Naive thymus-derived CD4-positive, alpha-beta T cell (primary cell): ENCODE measurements at regions of chr6 and their contacts with region 1.

Region 1: DNA sequence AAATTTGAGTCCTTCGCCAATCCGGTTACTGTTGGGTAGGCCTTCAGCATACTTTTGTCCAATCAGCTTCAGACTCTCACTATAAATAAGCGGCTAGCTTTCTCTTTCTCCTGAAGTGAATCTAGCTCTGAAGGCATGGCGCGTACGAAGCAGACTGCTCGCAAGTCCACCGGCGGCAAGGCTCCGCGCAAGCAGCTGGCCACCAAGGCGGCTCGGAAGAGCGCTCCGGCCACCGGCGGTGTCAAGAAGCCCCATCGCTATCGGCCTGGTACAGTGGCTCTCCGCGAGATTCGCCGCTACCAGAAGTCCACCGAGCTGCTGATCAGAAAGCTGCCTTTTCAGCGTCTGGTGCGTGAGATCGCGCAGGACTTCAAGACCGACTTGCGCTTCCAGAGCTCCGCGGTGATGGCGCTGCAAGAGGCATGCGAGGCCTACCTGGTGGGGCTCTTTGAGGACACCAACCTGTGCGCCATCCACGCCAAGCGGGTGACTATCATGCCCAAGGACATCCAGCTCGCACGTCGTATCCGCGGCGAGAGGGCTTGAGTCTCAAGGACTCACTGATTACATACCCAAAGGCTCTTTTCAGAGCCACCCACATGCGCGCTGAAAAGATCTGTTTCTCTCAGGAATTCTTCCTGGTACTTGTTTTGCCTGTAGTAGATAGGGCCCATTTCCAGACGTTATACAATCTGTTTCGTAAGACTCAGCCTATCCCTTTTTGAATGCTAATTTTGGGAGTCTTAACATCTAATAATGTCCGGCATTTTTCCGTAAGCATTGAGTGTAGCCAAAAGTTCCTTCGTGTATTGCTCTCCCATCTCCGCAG is 102.0 kb downstream of the OR2B2 start:
- DNase-seq: peak; percentile 66 to 96 (median 92)
- ATAC-seq: peak; percentile 71
- H3K4me3 ChIP-seq: peak overlapping the region; percentile 76
- H3K4me3 Mint-ChIP-seq: peak overlapping the region; percentile 81 to 97 (median 94)
- H3K27ac ChIP-seq: peak overlapping the region; percentile 86
- H3K27ac Mint-ChIP-seq: peak overlapping the region; percentile 95 to 99 (median 98)
- H3K4me1 ChIP-seq: peaks cover 20 to 42% of the 10 kb centered on the region in 2 donors
- H3K4me1 Mint-ChIP-seq: peaks cover 18 to 82% (median 61%) of the 10 kb centered on the region in 7 donors
- H3K27me3 ChIP-seq: no peaks in the 10 kb centered on the region
- H3K27me3 Mint-ChIP-seq: peaks cover 0 to 9% (median 0%) of the 10 kb centered on the region in 5 donors

Region 2: DNA sequence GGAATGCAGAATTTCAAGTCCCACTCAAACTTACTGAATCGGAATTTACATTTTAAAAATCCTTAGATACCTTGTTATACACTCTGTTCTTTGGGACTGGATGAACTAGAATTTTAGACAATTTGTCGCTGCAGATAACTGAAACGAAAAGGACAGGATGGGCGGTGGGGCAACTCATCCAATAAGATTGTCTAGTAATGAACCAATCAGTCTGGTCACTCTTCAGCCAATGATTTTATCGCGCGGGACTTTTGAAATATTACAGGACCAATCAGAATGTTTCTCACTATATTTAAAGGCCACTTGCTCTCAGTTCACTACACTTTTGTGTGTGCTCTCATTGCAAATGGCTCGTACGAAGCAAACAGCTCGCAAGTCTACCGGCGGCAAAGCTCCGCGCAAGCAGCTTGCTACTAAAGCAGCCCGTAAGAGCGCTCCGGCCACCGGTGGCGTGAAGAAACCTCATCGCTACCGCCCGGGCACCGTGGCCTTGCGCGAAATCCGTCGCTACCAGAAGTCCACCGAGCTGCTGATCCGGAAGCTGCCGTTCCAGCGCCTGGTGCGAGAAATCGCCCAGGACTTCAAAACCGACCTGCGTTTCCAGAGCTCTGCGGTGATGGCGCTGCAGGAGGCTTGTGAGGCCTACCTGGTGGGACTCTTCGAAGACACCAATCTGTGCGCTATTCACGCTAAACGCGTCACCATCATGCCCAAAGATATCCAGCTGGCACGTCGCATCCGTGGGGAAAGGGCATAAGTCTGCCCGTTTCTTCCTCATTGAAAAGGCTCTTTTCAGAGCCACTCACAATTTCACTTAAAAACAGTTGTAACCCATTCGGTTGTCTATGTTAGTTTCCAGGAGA is 1764.9 kb before region 1 on chr6:
- CTCF ChIA-PET with region 1: interaction called, 3 read pairs
- POLR2A ChIA-PET with region 1: interaction called, 38 read pairs
- intact Hi-C with region 1: loop called in 1 of 2 experiments (anchors 5 kb)
- DNase-seq: peak; percentile 39 to 93 (median 89)
- ATAC-seq: peak; percentile 68
- H3K4me3 ChIP-seq: peak overlapping the region; percentile 91
- H3K4me3 Mint-ChIP-seq: peak overlapping the region; percentile 87 to 98 (median 94)
- H3K27ac ChIP-seq: peak overlapping the region; percentile 90
- H3K27ac Mint-ChIP-seq: peak overlapping the region; percentile 80 to 98 (median 95)
- H3K4me1 ChIP-seq: peaks cover 7 to 19% of the 10 kb centered on the region in 2 donors
- H3K4me1 Mint-ChIP-seq: peaks cover 8 to 51% (median 20%) of the 10 kb centered on the region in 7 donors
- H3K27me3 ChIP-seq: no peaks in the 10 kb centered on the region
- H3K27me3 Mint-ChIP-seq: peaks cover 0 to 3% (median 0%) of the 10 kb centered on the region in 5 donors

Region 3: DNA sequence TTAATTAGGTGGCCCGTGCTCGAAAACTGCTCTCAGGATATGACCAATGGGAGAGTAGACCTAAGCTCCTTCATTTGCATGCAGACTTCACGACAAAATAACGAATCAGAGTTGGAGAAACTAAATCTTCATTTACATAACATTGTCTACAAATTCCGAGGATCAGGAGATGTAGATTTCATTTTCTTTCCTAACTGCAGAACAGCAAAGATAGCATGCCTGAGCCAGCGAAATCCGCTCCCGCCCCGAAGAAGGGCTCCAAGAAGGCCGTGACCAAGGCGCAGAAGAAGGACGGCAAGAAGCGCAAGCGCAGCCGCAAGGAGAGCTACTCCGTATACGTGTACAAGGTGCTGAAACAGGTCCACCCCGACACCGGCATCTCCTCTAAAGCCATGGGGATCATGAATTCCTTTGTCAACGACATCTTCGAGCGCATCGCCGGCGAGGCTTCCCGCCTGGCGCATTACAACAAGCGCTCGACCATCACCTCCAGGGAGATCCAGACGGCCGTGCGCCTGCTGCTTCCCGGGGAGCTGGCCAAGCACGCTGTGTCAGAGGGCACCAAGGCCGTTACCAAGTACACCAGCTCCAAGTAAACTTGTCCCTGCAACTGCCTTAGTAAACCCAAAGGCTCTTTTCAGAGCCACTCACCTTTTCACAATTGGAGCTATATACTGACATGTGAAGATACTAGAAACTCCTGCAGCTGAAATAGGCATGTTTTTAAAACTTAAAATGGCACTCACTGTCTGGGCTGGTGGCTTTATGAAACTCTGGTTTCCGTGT is 1626.4 kb before region 1 on chr6:
- CTCF ChIA-PET with region 1: no interaction called
- POLR2A ChIA-PET with region 1: interaction called, 11 read pairs
- intact Hi-C with region 1: no loop called
- DNase-seq: peak; percentile 43 to 83 (median 77)
- ATAC-seq: peak; percentile 91
- H3K4me3 ChIP-seq: peak overlapping the region; percentile 82
- H3K4me3 Mint-ChIP-seq: peak overlapping the region; percentile 84 to 99 (median 98)
- H3K27ac ChIP-seq: peak overlapping the region; percentile 76
- H3K27ac Mint-ChIP-seq: peak overlapping the region; percentile 83 to 99 (median 90)
- H3K4me1 ChIP-seq: peaks cover 13 to 30% of the 10 kb centered on the region in 2 donors
- H3K4me1 Mint-ChIP-seq: peaks cover 19 to 59% (median 49%) of the 10 kb centered on the region in 7 donors
- H3K27me3 ChIP-seq: no peaks in the 10 kb centered on the region
- H3K27me3 Mint-ChIP-seq: no peaks in the 10 kb centered on the region

Region 4: GRCh38 chr6:27177485-27178406 is 632.4 kb before region 1 on chr6:
- CTCF ChIA-PET with region 1: no interaction called
- POLR2A ChIA-PET with region 1: interaction called, 10 read pairs
- intact Hi-C with region 1: no loop called
- DNase-seq: peak; percentile 49 to 78 (median 66)
- ATAC-seq: peak; percentile 83
- H3K4me3 ChIP-seq: peak overlapping the region; percentile 99
- H3K4me3 Mint-ChIP-seq: peak overlapping the region; percentile 90 to 98 (median 96)
- H3K27ac ChIP-seq: peak overlapping the region; percentile 74
- H3K27ac Mint-ChIP-seq: peak overlapping the region; percentile 79 to 100 (median 95)
- H3K4me1 ChIP-seq: peaks cover 0 to 3% of the 10 kb centered on the region in 2 donors
- H3K4me1 Mint-ChIP-seq: peaks cover 0 to 33% (median 14%) of the 10 kb centered on the region in 7 donors
- H3K27me3 ChIP-seq: no peaks in the 10 kb centered on the region
- H3K27me3 Mint-ChIP-seq: peaks cover 0 to 37% (median 0%) of the 10 kb centered on the region in 5 donors

Region 5: GRCh38 chr6:27825025-27825793 is 15.1 kb after region 1 on chr6:
- CTCF ChIA-PET with region 1: interaction called, 11 read pairs
- POLR2A ChIA-PET with region 1: interaction called, 739 read pairs
- intact Hi-C with region 1: loop called (anchors 1 kb)
- DNase-seq: no peak
- ATAC-seq: no peak
- H3K4me3 ChIP-seq: peak overlapping the region; percentile 87
- H3K4me3 Mint-ChIP-seq: peak overlapping the region; percentile 82 to 99 (median 94)
- H3K27ac ChIP-seq: peak overlapping the region; percentile 89
- H3K27ac Mint-ChIP-seq: peak overlapping the region; percentile 90 to 100 (median 98)
- H3K4me1 ChIP-seq: peaks cover 6% of the 10 kb centered on the region in 2 donors
- H3K4me1 Mint-ChIP-seq: peaks cover 11 to 50% (median 33%) of the 10 kb centered on the region in 7 donors
- H3K27me3 ChIP-seq: no peaks in the 10 kb centered on the region
- H3K27me3 Mint-ChIP-seq: peaks cover 0 to 4% (median 0%) of the 10 kb centered on the region in 5 donors

Region 6: GRCh38 chr6:27871924-27872638 is 61.9 kb after region 1 on chr6:
- CTCF ChIA-PET with region 1: interaction called, 15 read pairs
- POLR2A ChIA-PET with region 1: interaction called, 588 read pairs
- intact Hi-C with region 1: loop called (anchors 1 to 2 kb)
- DNase-seq: peak; percentile 68 to 97 (median 94)
- ATAC-seq: peak; percentile 88
- H3K4me3 ChIP-seq: peak overlapping the region; percentile 69
- H3K4me3 Mint-ChIP-seq: peak overlapping the region; percentile 83 to 99 (median 94)
- H3K27ac ChIP-seq: peak overlapping the region; percentile 84
- H3K27ac Mint-ChIP-seq: peak overlapping the region; percentile 95 to 98 (median 97)
- H3K4me1 ChIP-seq: peaks cover under 1 to 19% of the 10 kb centered on the region in 2 donors
- H3K4me1 Mint-ChIP-seq: peaks cover 15 to 69% (median 42%) of the 10 kb centered on the region in 7 donors
- H3K27me3 ChIP-seq: no peaks in the 10 kb centered on the region
- H3K27me3 Mint-ChIP-seq: peaks cover 0 to 8% (median 0%) of the 10 kb centered on the region in 5 donors